ENCODE measurements at regions of chr14 and their contacts with region 1.

Region 1: DNA sequence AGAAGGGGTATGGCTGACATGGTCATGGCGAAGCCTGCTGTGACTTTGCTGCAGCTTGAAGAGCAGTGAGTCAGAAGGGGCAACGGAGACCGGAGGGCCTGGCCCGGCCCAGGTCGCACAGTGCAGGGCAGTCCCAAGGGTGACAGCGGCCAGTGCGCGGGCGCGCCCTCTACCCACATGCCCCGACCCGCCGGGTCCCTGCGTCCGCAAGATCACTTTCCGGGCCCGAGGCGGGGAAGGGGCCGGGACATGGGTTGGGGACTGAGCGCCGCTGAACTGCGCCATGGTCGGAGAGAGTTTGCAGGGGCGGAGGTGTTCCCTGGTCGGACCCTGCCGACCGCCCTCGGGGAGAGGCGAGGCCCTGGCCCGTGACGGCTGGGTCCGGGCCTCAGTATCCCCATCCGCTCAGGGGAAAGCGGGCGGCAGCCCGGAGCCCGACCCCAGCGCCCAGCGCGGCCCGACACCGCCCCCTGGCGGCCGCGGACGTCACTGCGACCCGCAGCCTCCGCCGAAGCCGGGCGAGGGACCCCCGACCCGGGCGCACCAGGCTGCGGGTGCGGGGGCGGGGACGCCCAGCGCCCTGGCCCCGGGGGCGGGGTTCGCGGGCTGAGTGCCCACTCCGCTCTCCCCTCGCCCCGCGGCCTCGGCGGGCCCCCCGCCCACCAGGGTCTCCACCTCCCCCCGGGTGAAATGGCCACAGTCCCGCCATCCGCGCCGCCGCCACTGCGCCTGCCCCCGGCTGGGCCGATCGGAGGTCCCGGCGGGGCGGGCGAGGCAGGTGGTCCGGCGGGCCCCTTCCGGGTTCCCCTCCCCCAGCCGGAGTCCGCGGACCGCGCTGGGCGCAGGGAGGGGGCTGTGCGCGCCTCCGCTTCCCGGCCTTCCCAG is 7.2 kb upstream of the ANKRD9 start:
- DNase-seq: peak; percentile 39 to 81 (median 65)
- H3K4me3 ChIP-seq: peak overlapping the region; percentile 50
- H3K27ac ChIP-seq: peak overlapping the region in 1 of 2 donors; percentile 33
- H3K4me1 ChIP-seq: peaks cover 4% of the 10 kb centered on the region
- H3K27me3 ChIP-seq: no peaks in the 10 kb centered on the region
- CTCF ChIP-seq: peak; percentile 63 to 99 (median 99)
- EP300 ChIP-seq: no peak
- POLR2A ChIP-seq: no peak

Region 2: DNA sequence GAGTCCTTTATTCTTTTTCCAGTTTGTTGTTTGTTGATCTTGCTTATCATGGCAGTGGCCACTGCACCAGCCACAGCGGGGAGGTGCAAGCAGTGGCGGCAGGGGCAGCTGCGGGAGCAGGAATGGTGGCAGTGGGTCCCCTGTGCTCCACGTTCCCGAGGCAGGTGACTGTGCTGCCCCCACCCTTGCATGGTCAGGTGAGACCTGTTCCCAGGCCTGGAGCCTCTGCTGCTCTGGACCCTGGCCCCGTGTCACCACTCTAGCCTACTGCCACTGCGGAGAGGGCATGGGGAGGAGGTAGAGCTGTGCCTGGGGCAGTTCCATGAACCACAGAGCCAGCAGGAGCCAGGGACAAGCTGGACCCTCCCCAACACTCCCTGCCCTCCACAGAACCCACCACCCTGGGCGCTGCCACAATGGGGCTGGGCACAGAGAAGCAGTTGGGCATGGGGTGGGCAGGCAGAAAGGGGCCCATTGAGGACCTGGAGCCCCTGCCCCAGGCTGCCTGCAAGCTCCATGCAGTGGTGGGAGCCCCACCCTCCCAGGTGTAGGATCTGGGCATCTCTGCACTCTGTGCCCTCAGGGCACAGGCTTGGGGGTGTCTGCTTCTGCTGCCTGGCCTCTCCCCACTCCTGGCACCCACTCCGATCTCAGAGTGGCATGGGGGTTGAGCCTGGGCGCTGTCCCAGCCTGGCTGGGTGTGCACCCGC is 400.3 kb before region 1 on chr14:
- intact Hi-C with region 1: no loop called
- DNase-seq: no peak
- H3K4me3 ChIP-seq: no peak overlapping the region
- H3K27ac ChIP-seq: no peak overlapping the region
- H3K4me1 ChIP-seq: no peaks in the 10 kb centered on the region
- H3K27me3 ChIP-seq: no peaks in the 10 kb centered on the region
- CTCF ChIP-seq: no peak
- EP300 ChIP-seq: no peak
- POLR2A ChIP-seq: no peak

Region 3: GRCh38 chr14:102351026-102351425 is 165.7 kb before region 1 on chr14:
- intact Hi-C with region 1: no loop called
- DNase-seq: no peak
- H3K4me3 ChIP-seq: no peak overlapping the region
- H3K27ac ChIP-seq: no peak overlapping the region
- H3K4me1 ChIP-seq: no peaks in the 10 kb centered on the region
- H3K27me3 ChIP-seq: no peaks in the 10 kb centered on the region
- CTCF ChIP-seq: no peak
- EP300 ChIP-seq: no peak
- POLR2A ChIP-seq: no peak

Region 4: GRCh38 chr14:102437997-102438915 is 78.5 kb before region 1 on chr14:
- intact Hi-C with region 1: loop called (anchors 1 to 2 kb)
- DNase-seq: peak; percentile 87 to 94 (median 91)
- H3K4me3 ChIP-seq: no peak overlapping the region
- H3K27ac ChIP-seq: no peak overlapping the region
- H3K4me1 ChIP-seq: no peaks in the 10 kb centered on the region
- H3K27me3 ChIP-seq: no peaks in the 10 kb centered on the region
- CTCF ChIP-seq: peak; percentile 75 to 81 (median 80)
- EP300 ChIP-seq: no peak
- POLR2A ChIP-seq: no peak

Measured in ovary (tissue), 10 donors.